IMR-90 (cell line): ENCODE measurements at regions of chr1 and their contacts with region 1.

Region 1: GRCh38 chr1:206106328-206107167 is 10.6 kb downstream of the AVPR1B start:
- DNase-seq: peak; percentile 79
- ATAC-seq: peak; percentile 97
- H3K4me3 ChIP-seq: no peak overlapping the region
- H3K27ac ChIP-seq: no peak overlapping the region
- H3K4me1 ChIP-seq: no peaks in the 10 kb centered on the region
- H3K27me3 ChIP-seq: peaks cover 36% of the 10 kb centered on the region
- CTCF ChIP-seq: peak; percentile 92
- POLR2A ChIP-seq: no peak
- RAD21 ChIP-seq: peak; percentile 90

Region 2: DNA sequence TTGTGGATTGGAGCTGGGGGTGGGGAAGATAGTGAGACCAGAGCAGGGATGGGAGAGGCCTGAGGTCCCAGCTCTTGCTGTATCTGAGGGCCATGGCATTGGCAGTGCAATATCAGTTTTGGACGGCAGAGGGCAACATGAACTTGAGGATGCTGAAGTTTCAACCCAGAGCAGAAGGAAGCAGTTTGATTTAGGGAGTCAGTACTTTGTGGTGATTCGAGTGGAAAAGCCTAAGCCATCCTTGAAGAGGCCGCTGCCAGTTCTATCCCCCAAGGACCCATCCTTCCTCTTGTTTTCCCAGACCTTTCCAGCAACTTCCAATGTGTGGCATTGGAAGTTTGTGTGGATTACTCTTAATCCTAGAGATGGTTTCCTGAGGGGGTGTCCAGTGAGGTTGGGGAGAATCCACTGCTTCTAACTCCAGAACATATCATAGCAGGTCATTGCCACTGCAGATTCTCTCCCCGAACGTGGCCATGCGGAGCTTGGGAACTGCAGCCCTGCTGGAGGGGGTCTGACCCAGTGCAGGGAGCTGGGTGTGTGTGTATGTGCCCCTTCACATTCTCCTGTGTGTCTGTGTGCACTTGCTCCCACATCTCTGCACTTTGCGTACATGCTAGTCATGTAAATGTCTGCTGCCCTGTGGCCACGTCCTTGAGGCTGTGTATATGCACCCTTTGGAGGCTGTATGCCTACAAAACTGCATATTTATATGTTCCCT is 187.4 kb before region 1 on chr1:
- CTCF ChIA-PET with region 1: no interaction called
- POLR2A ChIA-PET with region 1: no interaction called
- dilution Hi-C with region 1: no loop called
- in situ Hi-C with region 1: no loop called
- intact Hi-C with region 1: loop called (anchors 1 kb)
- DNase-seq: peak; percentile 84
- ATAC-seq: peak; percentile 97
- H3K4me3 ChIP-seq: no peak overlapping the region
- H3K27ac ChIP-seq: no peak overlapping the region
- H3K4me1 ChIP-seq: no peaks in the 10 kb centered on the region
- H3K27me3 ChIP-seq: no peaks in the 10 kb centered on the region; the same call in 1 of the 2 replicates
- CTCF ChIP-seq: peak; percentile 96
- POLR2A ChIP-seq: peak; percentile 43; the same call in 1 of the 2 replicates
- RAD21 ChIP-seq: peak; percentile 97

Region 3: DNA sequence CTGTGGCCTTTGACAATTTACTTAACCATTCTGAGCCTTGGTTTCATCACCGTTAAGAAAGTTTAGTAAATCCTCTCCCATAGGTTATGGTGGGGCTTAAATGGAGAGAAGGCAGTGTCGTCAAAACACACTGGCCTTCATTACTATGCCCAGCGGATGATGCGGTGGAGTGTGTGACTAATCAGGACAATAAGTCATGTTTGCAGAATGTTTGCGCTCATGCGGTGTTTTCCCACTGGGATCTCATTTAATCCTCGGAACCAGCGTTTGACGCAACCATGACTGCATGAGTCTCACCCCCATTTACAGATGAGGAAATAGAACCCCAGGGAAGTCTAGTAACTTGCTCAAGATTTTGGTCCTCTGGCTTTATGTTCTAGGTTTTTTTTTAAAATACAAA is 180.8 kb before region 1 on chr1:
- CTCF ChIA-PET with region 1: no interaction called
- POLR2A ChIA-PET with region 1: no interaction called
- dilution Hi-C with region 1: no loop called
- in situ Hi-C with region 1: loop called (anchors 5 kb)
- intact Hi-C with region 1: no loop called
- DNase-seq: peak; percentile 85
- ATAC-seq: peak; percentile 42
- H3K4me3 ChIP-seq: no peak overlapping the region
- H3K27ac ChIP-seq: no peak overlapping the region
- H3K4me1 ChIP-seq: no peaks in the 10 kb centered on the region
- H3K27me3 ChIP-seq: peaks cover 42% of the 10 kb centered on the region
- CTCF ChIP-seq: no peak
- POLR2A ChIP-seq: no peak
- RAD21 ChIP-seq: no peak

Region 4: DNA sequence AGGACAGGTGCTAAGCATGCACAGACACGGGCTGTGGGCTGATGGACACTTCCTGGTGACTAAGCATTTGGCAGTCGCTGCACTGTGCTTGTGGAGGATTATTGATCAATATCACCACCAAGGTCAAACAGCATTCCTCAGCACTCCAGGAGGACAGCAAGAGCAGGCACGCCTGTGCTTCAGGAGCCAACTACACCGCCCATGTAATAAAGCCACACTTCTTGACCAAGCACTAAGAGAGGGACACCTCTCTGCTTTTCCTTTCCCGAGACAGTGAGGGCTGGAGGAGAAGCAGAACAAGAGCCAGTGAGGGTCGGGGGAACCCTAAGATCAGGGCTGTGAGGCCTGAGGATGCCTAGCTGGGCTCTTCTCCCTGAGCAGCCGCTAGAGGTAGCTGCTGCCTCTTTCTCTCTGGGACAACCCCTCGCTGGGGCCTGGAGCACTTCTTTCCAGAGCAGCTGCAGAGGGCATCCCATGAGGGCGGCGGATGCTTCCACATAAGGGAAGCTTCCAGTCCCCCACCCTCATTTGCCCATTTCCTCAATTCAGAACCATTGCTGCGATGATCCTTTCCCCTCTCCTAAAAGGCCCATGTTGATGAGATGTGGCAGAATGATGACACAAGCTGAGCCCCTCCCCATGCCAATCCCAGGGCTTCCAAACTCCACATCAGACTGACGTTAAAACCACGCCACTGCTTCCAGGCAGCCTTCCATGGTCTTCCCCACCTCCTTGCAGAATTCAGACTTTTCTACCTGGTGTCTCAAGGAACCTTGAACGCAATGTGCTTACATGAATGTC is 122.4 kb before region 1 on chr1:
- CTCF ChIA-PET with region 1: interaction called, 34 read pairs
- POLR2A ChIA-PET with region 1: no interaction called
- dilution Hi-C with region 1: no loop called
- in situ Hi-C with region 1: loop called (anchors 5 kb)
- intact Hi-C with region 1: loop called (anchors 1 kb)
- DNase-seq: peak; percentile 55
- ATAC-seq: peak; percentile 99
- H3K4me3 ChIP-seq: no peak overlapping the region
- H3K27ac ChIP-seq: no peak overlapping the region
- H3K4me1 ChIP-seq: no peaks in the 10 kb centered on the region
- H3K27me3 ChIP-seq: no peaks in the 10 kb centered on the region
- CTCF ChIP-seq: peak; percentile 88
- POLR2A ChIP-seq: 0 out of 2 replicates have a peak, but pooled peaks have one; percentile 34
- RAD21 ChIP-seq: peak; percentile 87

Region 5: GRCh38 chr1:206030714-206031113 is 75.8 kb before region 1 on chr1:
- CTCF ChIA-PET with region 1: interaction called, 6 read pairs
- POLR2A ChIA-PET with region 1: no interaction called
- dilution Hi-C with region 1: no loop called
- in situ Hi-C with region 1: no loop called
- intact Hi-C with region 1: loop called (anchors 1 kb)
- DNase-seq: peak; percentile 62
- ATAC-seq: peak; percentile 92
- H3K4me3 ChIP-seq: no peak overlapping the region
- H3K27ac ChIP-seq: no peak overlapping the region
- H3K4me1 ChIP-seq: no peaks in the 10 kb centered on the region
- H3K27me3 ChIP-seq: peaks cover 41% of the 10 kb centered on the region
- CTCF ChIP-seq: peak; percentile 76
- POLR2A ChIP-seq: no peak
- RAD21 ChIP-seq: peak; percentile 56

Region 6: DNA sequence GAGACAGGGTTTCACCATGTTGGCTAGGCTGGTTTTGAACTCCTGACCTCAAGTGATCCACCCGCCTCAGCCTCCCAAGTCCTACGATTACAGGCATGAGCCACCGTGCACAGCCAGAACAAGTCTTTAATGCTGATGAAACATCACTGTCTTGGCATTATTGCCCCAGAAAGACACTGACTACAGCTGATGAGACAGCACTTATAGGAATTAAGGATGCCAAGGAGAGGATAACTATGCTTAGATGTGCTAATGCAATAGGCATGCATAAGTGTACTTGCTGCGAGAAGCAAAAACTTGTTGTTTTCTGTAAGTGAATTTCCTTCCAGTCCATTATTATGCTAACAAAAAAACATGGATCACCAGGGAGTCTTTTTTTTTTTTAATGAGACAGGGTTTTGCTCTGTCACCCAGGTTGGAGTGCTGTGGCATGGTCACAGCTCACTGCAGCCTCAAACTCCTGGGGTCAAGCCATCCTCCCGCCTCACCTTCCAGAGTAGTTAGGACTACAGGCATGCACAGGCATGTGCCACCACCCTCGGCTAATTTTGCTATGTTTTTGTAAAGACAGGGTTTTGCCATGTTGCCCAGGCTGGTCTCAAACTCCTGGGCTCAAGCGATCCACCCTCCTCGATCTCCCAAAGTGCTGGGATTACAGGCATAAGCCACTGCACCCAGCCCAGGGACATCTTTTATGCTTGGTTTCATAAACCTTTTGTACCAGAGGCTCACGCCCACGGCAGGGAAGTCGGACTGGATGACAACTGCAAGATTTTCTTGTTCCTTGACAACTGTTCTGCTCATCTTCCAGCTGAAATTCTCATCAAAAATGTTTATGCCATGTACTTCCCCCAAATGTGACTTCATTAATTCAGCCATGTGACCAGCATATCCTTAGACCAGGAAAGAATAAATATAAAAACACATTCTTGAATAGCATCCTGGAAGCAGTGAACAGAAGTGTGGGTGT is 30.5 kb before region 1 on chr1:
- CTCF ChIA-PET with region 1: no interaction called
- POLR2A ChIA-PET with region 1: no interaction called
- dilution Hi-C with region 1: no loop called
- in situ Hi-C with region 1: no loop called
- intact Hi-C with region 1: no loop called
- DNase-seq: peak; percentile 43
- ATAC-seq: peak; percentile 56
- H3K4me3 ChIP-seq: no peak overlapping the region
- H3K27ac ChIP-seq: no peak overlapping the region
- H3K4me1 ChIP-seq: no peaks in the 10 kb centered on the region
- H3K27me3 ChIP-seq: peaks cover 31% of the 10 kb centered on the region
- CTCF ChIP-seq: no peak
- POLR2A ChIP-seq: no peak
- RAD21 ChIP-seq: no peak